Caco-2 (cell line): ENCODE measurements at regions of chr11 and their contacts with region 1.

Region 1: DNA sequence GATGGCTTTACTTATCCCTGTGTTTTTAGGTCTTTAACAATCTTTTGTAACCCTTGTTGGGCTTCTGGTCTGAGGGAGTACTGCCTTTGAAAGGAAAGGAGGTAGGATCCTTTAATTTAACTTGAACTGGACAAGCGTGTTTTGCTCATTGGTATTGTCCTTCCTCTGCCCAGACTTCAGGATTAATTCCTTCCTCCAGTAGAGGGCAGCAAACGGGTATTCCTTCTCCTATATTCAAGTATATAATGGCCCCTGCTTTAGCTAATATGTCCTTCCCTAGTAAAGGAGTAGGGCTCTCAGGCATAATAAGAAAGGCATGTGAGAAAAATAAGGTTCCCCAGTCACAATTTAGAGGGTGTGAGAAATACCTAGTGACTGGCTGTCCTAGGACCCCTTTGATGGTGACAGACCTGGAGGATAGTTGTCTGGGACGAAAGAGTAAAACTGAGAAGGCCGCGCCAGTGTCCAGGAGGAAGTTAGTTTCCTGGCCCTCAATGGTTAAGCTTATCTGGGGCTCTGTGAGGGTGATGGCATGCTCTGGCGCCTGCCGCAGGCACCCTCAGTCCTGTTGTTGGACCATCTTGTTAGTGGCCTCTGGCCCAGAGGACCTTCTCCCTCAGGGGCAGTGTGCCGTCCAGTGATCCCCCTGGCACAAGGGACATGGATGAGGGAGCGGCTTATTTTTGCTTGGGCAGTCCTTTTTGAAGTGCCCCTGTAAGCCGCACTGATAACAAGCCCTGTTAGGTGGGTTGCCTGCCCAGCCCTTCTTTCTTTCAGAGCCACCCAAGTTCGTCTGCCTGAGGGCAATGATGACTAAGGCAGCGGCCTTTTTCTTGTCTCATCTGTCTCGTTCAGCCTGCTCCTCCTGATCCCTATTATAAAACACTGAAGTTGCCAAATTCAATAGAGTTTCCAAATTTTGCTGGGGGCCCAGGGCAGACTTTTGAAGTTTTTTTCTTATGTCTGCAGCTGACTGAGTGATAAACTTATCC is 51.8 kb downstream of the C11orf71 start:
- DNase-seq: peak; percentile 62 to 79
- H3K4me3 ChIP-seq: no peak overlapping the region
- H3K4me3 Mint-ChIP-seq: no peak overlapping the region
- H3K27ac Mint-ChIP-seq: no peak overlapping the region
- H3K4me1 ChIP-seq: no peaks in the 10 kb centered on the region
- H3K4me1 Mint-ChIP-seq: no peaks in the 10 kb centered on the region
- H3K27me3 ChIP-seq: no peaks in the 10 kb centered on the region
- H3K27me3 Mint-ChIP-seq: no peaks in the 10 kb centered on the region
- CTCF ChIP-seq: peak; percentile 64 to 75

Region 2: DNA sequence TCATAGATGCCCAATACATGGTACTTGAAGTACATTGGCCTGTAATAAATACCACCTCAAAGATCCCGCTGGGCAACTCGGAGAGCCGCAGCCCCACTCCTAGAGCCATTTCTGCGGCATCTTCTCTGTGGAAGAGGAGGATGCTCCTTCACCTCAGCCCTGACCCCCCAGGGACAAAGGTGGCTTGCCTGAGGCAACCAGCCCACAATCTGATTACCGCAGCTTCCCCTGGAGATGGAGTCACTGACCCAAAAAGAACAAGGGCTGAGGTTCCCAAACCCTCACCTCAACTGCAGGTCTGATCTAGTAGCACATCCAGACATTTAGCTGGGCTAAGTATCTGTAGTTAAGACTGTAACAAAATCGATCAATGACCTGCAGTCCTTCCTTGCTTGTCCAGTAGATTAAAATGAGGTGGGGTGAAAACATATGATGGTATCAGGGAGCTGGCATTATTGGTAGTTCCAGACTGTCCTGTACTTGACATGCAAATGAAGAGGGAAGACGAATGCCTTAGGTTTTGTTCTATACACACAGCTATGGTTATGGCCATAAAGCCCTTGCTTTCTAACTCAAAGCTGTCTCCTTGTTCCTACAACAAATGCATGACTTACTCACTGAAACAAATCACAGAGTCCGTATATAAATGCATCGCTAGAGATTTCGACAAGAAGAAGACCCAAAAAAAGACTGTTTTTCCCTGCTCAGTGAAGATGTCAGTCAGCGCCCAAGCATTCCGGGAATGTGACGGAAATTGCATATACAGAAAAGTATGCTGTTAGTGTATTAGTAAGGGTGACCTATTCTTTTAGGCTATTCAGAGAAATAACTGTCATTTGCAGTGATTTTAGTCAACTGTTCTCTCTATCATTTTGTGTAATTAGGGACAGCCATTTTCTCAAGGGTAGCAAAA is 18.1 kb after region 1 on chr11:
- CTCF ChIA-PET with region 1: no interaction called
- POLR2A ChIA-PET with region 1: no interaction called
- intact Hi-C with region 1: loop called (anchors 2 kb)
- DNase-seq: peak in 1 of 2 experiments; percentile 25
- H3K4me3 ChIP-seq: no peak overlapping the region
- H3K4me3 Mint-ChIP-seq: no peak overlapping the region
- H3K27ac Mint-ChIP-seq: peak overlapping the region; percentile 11
- H3K4me1 ChIP-seq: peaks cover 28% of the 10 kb centered on the region
- H3K4me1 Mint-ChIP-seq: peaks cover 24% of the 10 kb centered on the region
- H3K27me3 ChIP-seq: no peaks in the 10 kb centered on the region
- H3K27me3 Mint-ChIP-seq: no peaks in the 10 kb centered on the region
- CTCF ChIP-seq: no peak

Region 3: GRCh38 chr11:114447892-114448291 is 99.4 kb after region 1 on chr11:
- CTCF ChIA-PET with region 1: interaction called, 3 read pairs
- POLR2A ChIA-PET with region 1: no interaction called
- intact Hi-C with region 1: loop called (anchors 2 kb)
- DNase-seq: peak in 1 of 2 experiments; percentile 24
- H3K4me3 ChIP-seq: no peak overlapping the region
- H3K4me3 Mint-ChIP-seq: no peak overlapping the region
- H3K27ac Mint-ChIP-seq: peak overlapping the region; percentile 84
- H3K4me1 ChIP-seq: peaks cover 20% of the 10 kb centered on the region
- H3K4me1 Mint-ChIP-seq: peaks cover 42% of the 10 kb centered on the region
- H3K27me3 ChIP-seq: no peaks in the 10 kb centered on the region
- H3K27me3 Mint-ChIP-seq: no peaks in the 10 kb centered on the region
- CTCF ChIP-seq: no peak

Region 4: DNA sequence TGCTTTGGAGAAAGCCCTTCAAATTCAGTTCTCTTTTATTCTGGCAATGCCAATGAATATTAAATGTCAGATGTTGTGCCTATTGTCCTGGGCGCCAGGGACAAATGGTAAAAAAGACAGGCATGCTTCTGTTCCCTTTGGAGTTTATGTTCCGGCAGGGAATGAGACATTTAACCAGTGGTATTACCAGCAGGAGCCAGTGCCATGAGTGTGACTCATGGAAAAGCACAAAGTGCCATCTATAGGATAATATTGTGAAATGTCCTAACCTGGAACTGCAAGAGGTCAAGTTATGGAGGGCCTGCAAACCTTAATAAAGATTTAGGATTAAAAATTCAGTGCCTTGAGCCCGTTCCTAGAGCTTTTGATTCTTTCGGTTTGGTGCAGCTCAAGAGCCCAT is 130.3 kb after region 1 on chr11:
- CTCF ChIA-PET with region 1: no interaction called
- POLR2A ChIA-PET with region 1: no interaction called
- intact Hi-C with region 1: loop called (anchors 2 kb)
- DNase-seq: no peak
- H3K4me3 ChIP-seq: no peak overlapping the region
- H3K4me3 Mint-ChIP-seq: no peak overlapping the region
- H3K27ac Mint-ChIP-seq: no peak overlapping the region
- H3K4me1 ChIP-seq: 0 out of 2 replicates have a peak, but pooled peaks cover 7% of the 10 kb centered on the region
- H3K4me1 Mint-ChIP-seq: no peaks in the 10 kb centered on the region
- H3K27me3 ChIP-seq: no peaks in the 10 kb centered on the region
- H3K27me3 Mint-ChIP-seq: peaks cover 3% of the 10 kb centered on the region
- CTCF ChIP-seq: peak in 1 of 2 experiments; percentile 2

Region 5: DNA sequence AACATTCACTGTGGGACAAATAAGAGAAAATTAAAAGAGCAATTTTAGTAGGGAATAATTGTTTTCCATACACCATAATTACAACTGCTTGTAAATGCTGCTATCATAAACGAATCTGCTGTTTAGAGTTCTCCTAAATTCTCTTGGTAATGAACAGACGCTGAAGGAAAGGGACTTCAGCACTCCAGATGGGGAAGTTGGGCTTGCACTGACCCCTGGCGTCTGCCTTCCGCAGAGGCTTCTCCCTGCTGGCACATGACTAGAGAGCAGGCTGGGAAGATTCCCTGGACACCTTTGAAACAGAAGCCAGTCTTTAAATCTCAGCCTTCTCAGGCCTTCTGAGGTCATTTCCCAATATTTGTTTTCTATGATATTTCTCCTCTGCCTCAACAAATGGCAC is 413.9 kb after region 1 on chr11:
- CTCF ChIA-PET with region 1: no interaction called
- POLR2A ChIA-PET with region 1: no interaction called
- intact Hi-C with region 1: loop called (anchors 1 kb)
- DNase-seq: peak; percentile 78 to 81
- H3K4me3 ChIP-seq: no peak overlapping the region
- H3K4me3 Mint-ChIP-seq: no peak overlapping the region
- H3K27ac Mint-ChIP-seq: no peak overlapping the region
- H3K4me1 ChIP-seq: no peaks in the 10 kb centered on the region
- H3K4me1 Mint-ChIP-seq: no peaks in the 10 kb centered on the region
- H3K27me3 ChIP-seq: no peaks in the 10 kb centered on the region; the same call in 1 of the 2 replicates
- H3K27me3 Mint-ChIP-seq: peaks cover 23% of the 10 kb centered on the region
- CTCF ChIP-seq: peak; percentile 92 to 98